ENCODE measurements at regions of chr11 and their contacts with region 1.

Region 1: DNA sequence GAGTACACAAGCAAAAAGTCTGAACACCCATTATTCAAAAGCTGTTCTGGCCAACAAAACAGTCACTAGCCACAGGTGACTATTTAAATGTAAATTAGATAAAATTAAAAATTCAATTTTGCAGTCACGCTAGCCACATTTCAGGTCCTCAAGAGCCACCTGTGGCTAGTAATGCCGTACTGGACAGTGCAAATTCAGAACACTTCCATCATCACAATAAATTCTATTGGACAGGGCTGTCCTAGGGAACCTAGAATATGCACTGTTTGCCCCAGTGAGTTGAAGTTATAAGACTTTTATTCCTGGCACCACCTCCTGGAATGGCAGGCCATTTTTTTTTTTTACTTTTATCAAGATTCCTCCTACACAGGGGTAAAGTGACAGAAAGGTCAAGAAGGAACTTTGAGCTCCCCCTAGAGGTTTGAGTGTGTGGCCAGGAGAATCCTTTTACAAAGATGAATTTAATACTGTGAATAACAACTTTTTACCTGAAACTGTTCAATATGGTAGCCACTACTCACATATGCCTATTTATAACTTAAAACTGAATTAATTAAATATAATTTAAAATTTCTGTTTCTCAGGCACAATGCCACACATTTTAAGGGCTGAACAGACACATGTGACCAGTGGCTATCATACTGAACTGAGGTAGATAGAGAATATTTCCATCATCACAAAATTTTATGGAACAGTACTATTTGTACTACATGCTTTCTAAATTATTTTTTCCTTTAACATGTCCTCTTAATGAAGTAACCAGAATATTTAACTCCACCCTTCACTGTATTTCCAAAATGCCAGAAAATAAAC is 6.5 kb downstream of the MSANTD2 start:
- DNase-seq: no peak
- H3K4me3 ChIP-seq: no peak overlapping the region
- H3K27ac ChIP-seq: no peak overlapping the region
- H3K27me3 ChIP-seq: no peaks in the 10 kb centered on the region
- CTCF ChIP-seq: peak; percentile 78

Region 2: GRCh38 chr11:123166071-123166559 is 1627.6 kb before region 1 on chr11:
- CTCF ChIA-PET with region 1: no interaction called
- POLR2A ChIA-PET with region 1: no interaction called
- DNase-seq: peak; percentile 97
- H3K4me3 ChIP-seq: no peak overlapping the region
- H3K27ac ChIP-seq: peak overlapping the region; percentile 93
- H3K27me3 ChIP-seq: no peaks in the 10 kb centered on the region
- CTCF ChIP-seq: peak; percentile 72

Region 3: GRCh38 chr11:124662106-124662505 is 131.6 kb before region 1 on chr11:
- CTCF ChIA-PET with region 1: interaction called, 12 read pairs
- POLR2A ChIA-PET with region 1: no interaction called
- DNase-seq: no peak
- H3K4me3 ChIP-seq: no peak overlapping the region
- H3K27ac ChIP-seq: no peak overlapping the region
- H3K27me3 ChIP-seq: no peaks in the 10 kb centered on the region
- CTCF ChIP-seq: no peak

Region 4: GRCh38 chr11:124673333-124674167 is 120.1 kb before region 1 on chr11 and contains the starts of genes SIAE and SPA17:
- CTCF ChIA-PET with region 1: interaction called, 64 read pairs
- POLR2A ChIA-PET with region 1: interaction called, 3 read pairs
- DNase-seq: peak; percentile 92
- H3K4me3 ChIP-seq: peak within 1 kb of the TSS; percentile 74
- H3K27ac ChIP-seq: peak within 1 kb of the TSS; percentile 69
- H3K27me3 ChIP-seq: no peaks in the 10 kb centered on the region
- CTCF ChIP-seq: no peak
- polyA plus RNA-seq, gene SIAE: 33.5 and 37.9 TPM in 2 replicates
- polyA plus RNA-seq, gene SPA17: 6.5 and 8.4 TPM in 2 replicates

Region 5: GRCh38 chr11:124724979-124725718 is 68.5 kb before region 1 on chr11:
- CTCF ChIA-PET with region 1: no interaction called
- POLR2A ChIA-PET with region 1: no interaction called
- DNase-seq: no peak
- H3K4me3 ChIP-seq: no peak overlapping the region
- H3K27ac ChIP-seq: no peak overlapping the region
- H3K27me3 ChIP-seq: peaks cover 20% of the 10 kb centered on the region
- CTCF ChIP-seq: no peak

Region 6: GRCh38 chr11:124758317-124759203 is 35.1 kb before region 1 on chr11:
- CTCF ChIA-PET with region 1: interaction called, 17 read pairs
- POLR2A ChIA-PET with region 1: no interaction called
- DNase-seq: no peak
- H3K4me3 ChIP-seq: peak overlapping the region; percentile 46
- H3K27ac ChIP-seq: no peak overlapping the region
- H3K27me3 ChIP-seq: peaks cover 24% of the 10 kb centered on the region
- CTCF ChIP-seq: peak; percentile 66

Region 7: GRCh38 chr11:124769801-124770639 is 23.7 kb before region 1 on chr11:
- CTCF ChIA-PET with region 1: interaction called, 18 read pairs
- POLR2A ChIA-PET with region 1: no interaction called
- DNase-seq: no peak
- H3K4me3 ChIP-seq: no peak overlapping the region
- H3K27ac ChIP-seq: no peak overlapping the region
- H3K27me3 ChIP-seq: no peaks in the 10 kb centered on the region
- CTCF ChIP-seq: no peak

Region 8: GRCh38 chr11:124778281-124778680 is 15.4 kb before region 1 on chr11:
- CTCF ChIA-PET with region 1: interaction called, 46 read pairs
- POLR2A ChIA-PET with region 1: no interaction called
- DNase-seq: no peak
- H3K4me3 ChIP-seq: no peak overlapping the region
- H3K27ac ChIP-seq: no peak overlapping the region
- H3K27me3 ChIP-seq: no peaks in the 10 kb centered on the region
- CTCF ChIP-seq: peak; percentile 22; the same call in 1 of the 2 replicates

Region 9: GRCh38 chr11:124812876-124813275 is 19.2 kb after region 1 on chr11:
- CTCF ChIA-PET with region 1: interaction called, 10 read pairs
- POLR2A ChIA-PET with region 1: no interaction called
- DNase-seq: no peak
- H3K4me3 ChIP-seq: no peak overlapping the region
- H3K27ac ChIP-seq: no peak overlapping the region
- H3K27me3 ChIP-seq: peaks cover 6% of the 10 kb centered on the region
- CTCF ChIP-seq: no peak

Measured in AG04450 (cell line).